Heart left ventricle (tissue), 16 donors: ENCODE measurements at regions of chr20 and their contacts with region 1.

Region 1: DNA sequence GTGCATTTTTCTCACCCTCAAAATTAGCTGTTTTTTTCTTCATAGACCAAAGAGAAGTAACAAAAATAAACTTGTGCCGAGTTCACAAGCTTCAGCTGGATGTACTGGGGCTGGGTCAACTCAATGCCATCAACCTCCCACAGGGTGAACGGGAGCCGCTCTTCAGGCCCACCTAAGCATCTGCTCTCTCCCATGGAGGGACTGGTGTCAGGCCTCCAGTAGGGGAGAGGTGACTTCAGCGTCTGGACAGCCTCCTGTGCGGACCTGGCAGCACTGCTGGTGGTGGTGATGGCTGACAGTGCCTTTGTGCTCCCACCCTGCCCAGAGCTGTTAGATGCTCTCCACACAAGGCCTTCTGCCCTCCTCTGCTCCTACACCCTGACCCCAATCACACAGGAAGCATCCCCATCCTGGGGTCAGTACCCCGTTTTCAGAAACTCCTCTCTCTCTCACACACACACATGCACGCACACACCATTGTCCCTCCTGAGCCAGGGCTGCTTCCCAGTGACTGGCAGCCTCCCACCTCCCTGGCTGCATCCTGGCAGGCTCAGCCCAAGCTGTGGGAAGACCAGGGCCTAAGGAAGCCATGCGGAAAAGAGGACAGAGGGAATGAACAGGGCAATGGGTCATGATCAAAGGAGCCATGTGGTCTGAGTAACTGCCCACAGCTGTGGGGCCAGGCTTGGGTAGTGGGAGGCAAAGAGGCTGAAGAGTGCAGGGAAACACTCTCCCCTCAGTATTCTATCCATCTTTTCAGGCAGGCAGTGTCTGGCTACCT is 17.7 kb downstream of the CST8 start:
- DNase-seq: no peak
- ATAC-seq: no peak
- H3K4me3 ChIP-seq: no peak overlapping the region
- H3K27ac ChIP-seq: no peak overlapping the region
- H3K4me1 ChIP-seq: no peaks in the 10 kb centered on the region
- H3K27me3 ChIP-seq: peaks cover 0 to 7% (median 0%) of the 10 kb centered on the region in 9 donors
- CTCF ChIP-seq: no peak
- POLR2A ChIP-seq: no peak

Region 2: GRCh38 chr20:23596579-23597250 is 88.1 kb after region 1 on chr20:
- intact Hi-C with region 1: loop called in 1 of 10 experiments (anchors 5 kb)
- DNase-seq: no peak
- ATAC-seq: no peak
- H3K4me3 ChIP-seq: no peak overlapping the region
- H3K27ac ChIP-seq: no peak overlapping the region
- H3K4me1 ChIP-seq: no peaks in the 10 kb centered on the region
- H3K27me3 ChIP-seq: no peaks in the 10 kb centered on the region
- CTCF ChIP-seq: no peak
- POLR2A ChIP-seq: no peak